ENCODE measurements at regions of chr22 and their contacts with region 1.

Region 1: DNA sequence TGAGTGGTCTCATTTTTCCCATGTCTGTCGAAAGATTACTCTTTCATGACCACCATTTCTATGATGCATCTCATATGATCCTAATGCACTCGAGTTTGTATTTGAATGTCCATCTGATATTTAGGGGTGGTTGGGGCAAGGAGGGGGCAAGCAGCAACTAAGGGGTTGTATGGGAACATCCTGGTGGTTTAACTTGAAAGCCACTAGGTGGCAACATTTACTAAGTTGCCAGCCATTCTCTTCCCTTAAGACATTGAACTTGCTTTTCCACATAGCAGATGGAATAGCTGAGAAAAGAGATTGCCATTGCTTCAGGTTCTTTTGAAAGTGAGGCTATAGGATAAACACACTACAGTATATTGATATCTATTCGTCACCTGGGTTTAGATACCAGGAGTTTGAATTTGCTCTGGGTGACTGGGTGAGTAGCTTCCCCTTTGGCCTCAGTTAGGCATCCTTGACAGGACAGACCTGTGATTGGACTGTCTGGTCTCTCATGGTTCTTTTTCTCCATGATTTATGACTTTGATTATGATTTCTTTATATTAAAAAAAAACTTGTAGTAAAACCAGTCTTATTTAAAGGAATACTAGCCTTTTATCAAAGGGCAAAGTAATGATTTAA is 32.4 kb downstream of the NF2 start:
- DNase-seq: peak; percentile 32
- ATAC-seq: peak; percentile 58; the same call in 2 of the 3 replicates
- H3K4me3 ChIP-seq: no peak overlapping the region
- H3K27ac ChIP-seq: no peak overlapping the region
- H3K4me1 ChIP-seq: peaks cover 13% of the 10 kb centered on the region
- H3K27me3 ChIP-seq: no peaks in the 10 kb centered on the region
- CTCF ChIP-seq: peak; percentile 75
- EP300 ChIP-seq: no peak
- POLR2A ChIP-seq: no peak
- RAD21 ChIP-seq: no peak; the same call in 1 of the 2 replicates

Region 2: GRCh38 chr22:29617922-29618629 is 17.8 kb before region 1 on chr22:
- CTCF ChIA-PET with region 1: no interaction called
- POLR2A ChIA-PET with region 1: no interaction called
- in situ Hi-C with region 1: no loop called
- intact Hi-C with region 1: no loop called
- DNase-seq: no peak
- ATAC-seq: no peak
- H3K4me3 ChIP-seq: no peak overlapping the region
- H3K27ac ChIP-seq: no peak overlapping the region
- H3K4me1 ChIP-seq: peaks cover 10% of the 10 kb centered on the region
- H3K27me3 ChIP-seq: no peaks in the 10 kb centered on the region
- CTCF ChIP-seq: no peak
- EP300 ChIP-seq: no peak
- POLR2A ChIP-seq: no peak
- RAD21 ChIP-seq: no peak

Region 3: DNA sequence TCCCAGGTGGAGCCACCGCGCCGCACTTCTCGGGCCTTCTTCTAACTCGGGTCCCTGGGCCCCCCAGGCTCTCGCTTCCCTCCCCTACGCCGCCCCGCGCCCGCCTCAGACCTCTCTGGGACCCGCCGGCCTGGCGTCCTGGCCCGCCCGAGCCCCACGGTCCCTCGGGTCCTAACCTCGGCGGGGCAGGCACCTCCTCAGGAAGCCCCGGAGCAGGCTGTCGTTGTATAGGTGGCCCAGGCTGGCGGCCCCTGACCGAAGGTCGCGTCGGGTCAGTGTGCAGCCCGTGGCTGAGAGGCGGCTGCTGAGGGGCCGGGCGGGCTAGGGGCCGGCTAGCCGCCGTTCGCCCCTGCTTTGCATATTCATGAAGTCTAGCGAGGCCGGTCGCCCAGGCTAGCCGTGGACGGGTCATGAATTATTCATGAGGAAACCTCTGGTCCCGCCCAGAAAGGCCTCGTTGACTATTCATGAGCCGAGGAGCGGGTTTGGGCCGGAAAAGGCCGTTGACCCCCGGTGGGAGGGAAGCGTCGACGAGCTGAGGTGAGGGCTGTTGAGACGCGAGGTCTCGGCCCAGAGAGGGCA is 444.2 kb after region 1 on chr22 and contains the start of gene HORMAD2:
- CTCF ChIA-PET with region 1: no interaction called
- POLR2A ChIA-PET with region 1: no interaction called
- in situ Hi-C with region 1: loop called (anchors 10 kb)
- intact Hi-C with region 1: no loop called
- DNase-seq: no peak
- ATAC-seq: no peak; the same call in 2 of the 3 replicates
- H3K4me3 ChIP-seq: no peak within 1 kb of the TSS
- H3K27ac ChIP-seq: no peak within 1 kb of the TSS
- H3K4me1 ChIP-seq: peaks cover 38% of the 10 kb centered on the region
- H3K27me3 ChIP-seq: peaks cover 0 to 8% of the 10 kb centered on the region in 2 experiments; a peak in 2 of 5 replicates
- CTCF ChIP-seq: no peak
- EP300 ChIP-seq: no peak
- POLR2A ChIP-seq: no peak
- RAD21 ChIP-seq: no peak
- total RNA-seq, gene HORMAD2: not detected in 2 replicates